Posterior vena cava (tissue), 2 donors: ENCODE measurements at regions of chr7 and their contacts with region 1.

Region 1: DNA sequence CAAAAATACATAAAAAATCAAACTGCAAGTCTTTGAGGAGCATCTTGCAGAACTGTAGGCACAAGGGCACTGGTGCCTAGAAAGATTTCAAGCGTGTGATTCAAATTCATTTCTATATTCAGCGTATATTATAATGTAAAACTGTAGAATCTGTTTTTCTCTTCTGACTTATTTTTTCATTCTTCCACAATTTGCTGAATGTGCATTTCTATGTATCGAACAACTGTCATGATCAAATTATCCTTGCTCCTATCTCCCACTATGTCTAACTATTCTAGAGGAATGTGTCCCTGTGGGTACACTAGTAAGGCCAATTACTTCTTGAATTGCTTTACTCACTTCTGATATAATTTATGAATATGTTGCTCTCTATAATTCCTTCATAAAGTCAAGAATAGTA is 283.0 kb upstream of the MAGI2 start:
- DNase-seq: no peak

Region 2: DNA sequence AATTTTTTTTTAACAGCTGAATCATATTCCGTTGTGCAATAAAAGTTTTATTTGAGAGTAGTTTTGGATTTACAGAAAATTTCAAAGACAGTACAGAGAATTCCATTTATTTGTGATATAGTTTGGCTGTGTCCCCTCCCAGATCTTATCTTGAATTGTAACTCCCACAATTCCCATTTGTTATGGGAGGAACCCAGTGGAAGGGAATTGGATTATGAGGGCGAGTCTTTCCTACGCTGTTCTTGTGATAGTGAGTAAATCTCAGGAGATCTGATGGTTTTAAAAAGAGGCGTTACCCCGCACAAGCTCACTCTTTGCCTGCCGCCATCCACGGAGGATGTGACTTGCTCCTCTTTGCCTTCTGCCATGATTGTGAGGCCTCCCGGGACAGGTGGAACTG is 55.0 kb before region 1 on chr7:
- intact Hi-C with region 1: loop called in 1 of 2 experiments (anchors 5 kb)
- DNase-seq: no peak

Region 3: DNA sequence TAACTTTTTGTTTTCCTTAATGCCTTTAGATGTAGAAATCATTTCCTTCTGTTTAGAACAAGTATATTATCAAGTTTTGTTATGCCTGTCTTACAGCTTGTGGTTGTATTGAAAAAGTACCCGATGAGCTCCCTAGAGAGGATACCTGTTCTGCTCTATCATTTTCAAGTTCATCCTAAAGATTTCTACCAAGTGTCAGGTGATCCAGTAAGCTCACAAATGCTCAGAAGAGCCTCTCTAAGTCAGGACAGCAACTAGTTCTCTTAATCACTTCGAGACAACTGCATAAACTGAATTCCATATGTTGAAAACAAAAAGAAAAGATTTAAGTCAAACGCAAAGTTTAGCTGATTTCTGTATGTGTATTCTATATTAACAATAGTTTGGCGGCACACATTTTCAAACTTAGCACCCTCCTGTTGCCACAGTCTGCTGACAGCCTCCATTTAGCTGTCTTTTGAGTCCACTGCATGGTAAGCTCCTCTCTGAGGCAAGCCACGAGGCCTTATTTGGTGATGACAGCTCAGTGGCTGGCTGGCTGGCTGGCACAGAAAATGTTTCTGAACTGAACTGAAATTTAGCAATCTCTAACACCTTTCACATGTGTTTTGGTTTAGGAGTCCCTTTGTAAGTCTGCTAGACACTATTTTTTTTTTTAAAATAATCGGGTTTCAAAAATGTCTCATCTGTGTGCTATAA is 1123.0 kb after region 1 on chr7:
- intact Hi-C with region 1: no loop called
- DNase-seq: peak; percentile 80